Aorta (tissue), 5 donors: ENCODE measurements at regions of chr6 and their contacts with region 1.

Region 1: DNA sequence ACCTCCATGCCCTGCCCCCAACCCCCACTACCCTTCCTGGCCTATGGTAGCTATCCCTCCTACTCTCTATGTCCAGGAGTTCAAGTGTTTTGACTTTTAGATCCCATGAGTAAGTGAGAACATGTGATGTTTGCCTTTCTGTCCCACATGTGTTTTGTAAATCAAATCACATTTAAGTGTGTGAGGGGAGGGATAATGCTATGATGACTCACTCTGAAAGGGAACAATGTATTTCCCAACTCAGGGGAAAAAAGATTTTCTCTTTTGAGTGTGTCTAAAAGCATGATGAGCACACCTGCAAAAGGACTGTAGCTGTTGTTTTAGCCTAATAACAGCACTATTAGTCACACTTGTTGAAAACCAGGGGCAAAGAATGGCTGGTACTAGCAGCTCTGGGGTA is 193.7 kb downstream of the GJA10 start:
- DNase-seq: no peak
- ATAC-seq: no peak
- H3K4me3 ChIP-seq: no peak overlapping the region
- H3K27ac ChIP-seq: no peak overlapping the region
- H3K4me1 ChIP-seq: no peaks in the 10 kb centered on the region
- H3K27me3 ChIP-seq: no peaks in the 10 kb centered on the region

Region 2: DNA sequence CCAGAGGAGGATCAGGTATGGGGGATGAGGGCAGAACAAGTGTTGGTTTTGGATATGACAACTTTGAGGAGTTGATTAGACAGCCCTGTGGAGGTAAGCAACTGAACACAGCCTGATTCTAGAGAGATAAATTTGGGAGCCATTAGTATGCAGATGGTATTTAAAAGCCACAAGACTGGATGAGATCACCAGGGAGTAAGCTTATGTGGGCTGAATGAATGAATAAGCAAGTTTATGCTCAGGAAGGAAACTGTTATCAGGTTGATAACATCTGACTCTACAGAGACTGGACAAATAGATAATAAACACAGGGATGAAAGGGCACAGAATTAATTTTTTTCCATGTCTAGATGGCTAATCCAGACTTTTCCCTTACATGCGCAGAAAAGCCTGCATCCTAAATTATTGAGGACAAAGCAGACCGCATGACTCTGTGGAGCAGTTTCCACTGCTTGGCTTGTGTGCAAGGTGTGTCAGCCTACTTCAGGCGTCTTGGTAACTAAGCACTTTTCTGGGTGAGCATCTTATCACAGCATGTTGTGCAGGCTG is 43.1 kb before region 1 on chr6:
- intact Hi-C with region 1: loop called in 1 of 2 experiments (anchors 5 kb)
- DNase-seq: no peak
- ATAC-seq: no peak
- H3K4me3 ChIP-seq: no peak overlapping the region
- H3K27ac ChIP-seq: no peak overlapping the region
- H3K4me1 ChIP-seq: no peaks in the 10 kb centered on the region
- H3K27me3 ChIP-seq: no peaks in the 10 kb centered on the region

Region 3: DNA sequence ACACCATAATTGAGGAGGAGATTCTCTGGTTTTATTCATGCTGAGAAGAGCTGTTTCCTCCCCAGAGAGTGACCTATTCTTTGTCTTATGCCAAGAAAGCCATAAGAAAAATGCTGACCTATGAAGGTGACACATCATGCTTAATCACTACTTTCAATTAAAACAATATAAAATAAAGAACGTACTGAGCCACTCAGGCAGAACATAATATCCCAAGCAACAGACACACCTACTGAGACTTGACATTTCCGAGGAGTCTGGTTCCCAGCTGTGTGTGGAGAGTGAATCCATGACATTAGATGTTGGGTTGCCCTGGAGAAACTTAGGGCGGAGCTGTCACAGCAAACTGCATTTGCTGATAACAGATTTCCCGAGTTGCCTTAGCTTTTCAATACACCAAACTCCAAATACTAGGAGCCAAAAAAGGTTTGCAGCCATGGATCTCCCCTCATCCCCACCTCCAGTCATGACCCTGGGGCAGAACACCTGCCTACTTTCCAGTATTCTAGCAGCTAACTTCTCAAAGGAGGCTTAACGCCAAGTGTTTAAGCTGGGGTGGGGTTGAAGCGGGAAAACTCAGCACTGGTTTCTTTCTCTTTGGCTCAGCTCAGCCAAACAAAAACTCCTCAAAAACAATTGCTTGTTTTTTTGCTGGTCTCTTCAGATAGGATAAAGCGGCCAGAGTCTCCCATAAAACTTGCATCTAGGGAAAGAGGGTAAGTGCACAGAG is 116.5 kb after region 1 on chr6:
- intact Hi-C with region 1: no loop called
- DNase-seq: no peak
- ATAC-seq: no peak
- H3K4me3 ChIP-seq: no peak overlapping the region
- H3K27ac ChIP-seq: no peak overlapping the region
- H3K4me1 ChIP-seq: no peaks in the 10 kb centered on the region
- H3K27me3 ChIP-seq: no peaks in the 10 kb centered on the region